ENCODE measurements at regions of chr7 and their contacts with region 1.

Region 1: GRCh38 chr7:50467817-50468610 is 17.9 kb upstream of the FIGNL1 start:
- DNase-seq: no peak
- H3K4me3 ChIP-seq: no peak overlapping the region
- H3K27me3 ChIP-seq: 0 out of 2 replicates have a peak, but pooled peaks cover 1% of the 10 kb centered on the region
- CTCF ChIP-seq: peak; percentile 92

Region 2: GRCh38 chr7:50369143-50370026 is 98.6 kb before region 1 on chr7:
- CTCF ChIA-PET with region 1: no interaction called
- POLR2A ChIA-PET with region 1: no interaction called
- DNase-seq: no peak
- H3K4me3 ChIP-seq: no peak overlapping the region
- H3K27me3 ChIP-seq: no peaks in the 10 kb centered on the region
- CTCF ChIP-seq: peak; percentile 22; the same call in 1 of the 2 replicates

Region 3: GRCh38 chr7:50481867-50482266 is 13.9 kb after region 1 on chr7:
- CTCF ChIA-PET with region 1: interaction called, 16 read pairs
- POLR2A ChIA-PET with region 1: no interaction called
- DNase-seq: no peak
- H3K4me3 ChIP-seq: no peak overlapping the region
- H3K27me3 ChIP-seq: 0 out of 2 replicates have a peak, but pooled peaks cover 1% of the 10 kb centered on the region
- CTCF ChIP-seq: no peak

Region 4: GRCh38 chr7:50679218-50680007 is 211.4 kb after region 1 on chr7:
- CTCF ChIA-PET with region 1: interaction called, 89 read pairs
- POLR2A ChIA-PET with region 1: no interaction called
- DNase-seq: no peak
- H3K4me3 ChIP-seq: no peak overlapping the region
- H3K27me3 ChIP-seq: no peaks in the 10 kb centered on the region
- CTCF ChIP-seq: 0 out of 2 replicates have a peak, but pooled peaks have one; percentile 16

Region 5: GRCh38 chr7:51080622-51081269 is 612.7 kb after region 1 on chr7:
- CTCF ChIA-PET with region 1: no interaction called
- POLR2A ChIA-PET with region 1: no interaction called
- DNase-seq: no peak
- H3K4me3 ChIP-seq: no peak overlapping the region
- H3K27me3 ChIP-seq: peaks cover 8% of the 10 kb centered on the region
- CTCF ChIP-seq: no peak

Region 6: DNA sequence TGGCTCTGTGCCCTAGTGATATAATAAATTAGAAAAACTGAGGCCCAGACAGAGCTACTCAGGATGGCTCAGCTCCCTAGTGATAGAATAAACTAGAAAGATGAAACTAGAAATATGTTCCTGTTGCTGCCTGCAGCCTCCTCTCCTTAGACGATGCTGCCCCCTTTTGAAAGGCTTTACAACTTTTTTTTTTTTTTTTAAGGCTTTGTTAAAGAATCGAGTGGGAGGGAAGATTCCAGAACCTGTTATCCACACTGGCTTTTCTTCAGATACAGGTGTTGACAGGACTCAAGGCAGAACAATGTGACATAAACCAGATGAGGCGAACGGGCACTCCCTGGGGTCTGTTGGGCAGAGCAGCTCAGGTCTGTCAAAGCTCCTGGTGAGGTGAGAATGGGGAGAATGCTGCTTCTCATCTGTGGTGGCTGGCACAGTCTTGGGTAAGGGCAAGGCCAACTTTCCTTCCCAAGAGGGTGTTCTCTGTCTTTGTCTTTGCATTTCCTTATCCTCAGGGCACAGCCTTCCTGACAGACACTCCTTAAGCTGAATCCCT is 673.5 kb after region 1 on chr7:
- CTCF ChIA-PET with region 1: interaction called, 67 read pairs
- POLR2A ChIA-PET with region 1: no interaction called
- DNase-seq: no peak
- H3K4me3 ChIP-seq: no peak overlapping the region
- H3K27me3 ChIP-seq: peaks cover 5% of the 10 kb centered on the region
- CTCF ChIP-seq: peak; percentile 75

Measured in BJ (cell line).